ENCODE measurements at regions of chr12 and their contacts with region 1.

Region 1: DNA sequence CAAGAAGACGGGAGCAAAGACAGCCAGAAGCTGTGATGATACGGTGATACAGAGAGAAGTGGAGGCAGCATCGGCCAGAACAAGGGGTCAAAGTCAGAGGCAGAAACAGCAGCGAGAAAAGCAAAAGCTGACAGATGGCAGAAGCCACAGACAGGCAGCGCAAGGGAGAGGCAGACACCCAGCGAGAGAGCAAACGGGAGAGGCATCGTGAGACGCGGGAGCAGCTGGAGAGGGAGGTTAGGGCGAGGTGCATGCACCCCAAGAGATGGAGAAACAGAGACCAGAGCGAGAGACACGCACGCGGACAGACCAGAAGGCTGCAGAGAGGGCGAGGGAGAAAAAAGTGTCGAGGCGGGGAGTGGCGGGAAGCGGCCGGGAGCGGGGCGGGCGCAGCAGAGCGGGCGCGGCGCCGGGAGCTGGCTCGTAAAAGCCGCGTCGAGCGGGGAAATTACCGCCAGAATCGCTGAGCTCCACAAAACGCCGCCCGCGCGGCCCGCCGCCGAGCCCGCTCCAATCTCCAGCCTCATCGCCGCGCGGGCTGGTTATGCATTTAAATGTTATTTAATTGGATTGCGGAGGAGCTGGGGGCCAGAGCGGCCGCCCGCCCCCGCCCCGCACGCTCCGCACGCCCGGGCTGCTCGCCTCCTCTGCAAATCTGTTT is 15.6 kb downstream of the SMUG1 start:
- DNase-seq: peak in 8 of 10 donors; percentile 16 to 71 (median 60)
- H3K4me3 ChIP-seq: peak overlapping the region; percentile 35 to 73 (median 55)
- H3K27ac ChIP-seq: peak overlapping the region in 8 of 59 donors; percentile 16 to 68 (median 36)
- H3K27me3 ChIP-seq: peaks cover 0 to 15% (median 0%) of the 10 kb centered on the region in 45 donors
- CTCF ChIP-seq: no peak

Region 2: DNA sequence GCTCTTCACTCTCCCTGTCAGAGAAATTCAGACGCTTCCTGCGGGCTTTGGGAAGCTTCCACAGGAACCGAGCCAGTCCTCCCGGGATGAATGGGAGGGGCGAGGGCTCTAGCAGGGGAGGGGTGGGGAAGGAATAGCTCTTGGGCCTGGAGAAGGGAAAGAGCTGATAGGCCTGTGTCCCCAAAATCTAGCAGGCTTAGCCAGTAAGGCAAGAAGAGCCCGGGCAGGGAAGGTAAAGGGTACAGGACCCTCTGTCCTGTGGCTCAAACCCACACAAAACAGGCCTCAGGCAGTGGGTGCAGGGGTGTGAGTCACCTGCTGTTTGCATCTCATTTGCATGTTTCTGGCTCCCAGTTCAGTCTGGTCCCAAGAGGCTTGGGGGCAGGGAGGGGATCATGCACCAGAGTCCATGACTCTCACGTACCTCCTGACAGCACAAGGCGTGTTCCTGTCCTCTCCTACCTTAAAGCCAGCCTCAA is 24.3 kb after region 1 on chr12:
- intact Hi-C with region 1: loop called in 1 of 2 experiments (anchors 1 kb)
- DNase-seq: no peak
- H3K4me3 ChIP-seq: no peak overlapping the region
- H3K27ac ChIP-seq: no peak overlapping the region
- H3K27me3 ChIP-seq: peaks cover 0 to 91% (median 49%) of the 10 kb centered on the region in 45 donors
- CTCF ChIP-seq: no peak

Region 3: DNA sequence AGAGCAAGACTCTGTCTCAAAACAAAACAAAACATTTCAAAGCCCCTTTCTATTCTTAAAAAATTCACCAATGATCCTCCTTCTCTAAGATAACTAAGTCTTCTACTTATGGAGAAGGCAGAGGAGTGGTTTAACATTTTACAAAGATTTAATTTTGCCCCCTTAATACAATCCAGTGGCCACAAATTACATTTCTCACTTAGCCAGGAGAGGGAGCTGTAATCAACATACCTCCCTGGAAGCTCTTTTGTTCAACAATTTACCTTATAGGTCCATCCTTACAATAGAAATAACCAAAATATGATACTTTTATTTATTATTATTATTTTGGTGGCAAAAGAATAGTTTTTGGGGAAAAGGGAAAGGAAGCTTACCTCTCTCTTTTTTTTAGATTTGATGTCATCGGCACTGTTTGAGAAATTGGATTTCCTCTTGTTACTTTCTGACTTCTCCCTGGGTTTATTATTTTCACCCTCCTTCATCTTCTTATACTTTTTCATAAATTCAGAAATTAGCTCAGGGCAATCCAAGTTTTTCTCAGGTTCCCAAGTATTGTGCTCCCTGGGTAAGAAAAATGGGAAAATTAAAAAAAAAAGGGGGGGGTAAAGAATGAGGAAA is 78.6 kb after region 1 on chr12:
- intact Hi-C with region 1: no loop called
- DNase-seq: no peak
- H3K4me3 ChIP-seq: no peak overlapping the region
- H3K27ac ChIP-seq: peak overlapping the region in 10 of 59 donors; percentile 5 to 66 (median 24)
- H3K27me3 ChIP-seq: no peaks in the 10 kb centered on the region
- CTCF ChIP-seq: peak; percentile 46 to 81 (median 67)

Measured in dorsolateral prefrontal cortex (tissue), 120 donors.